Transverse colon (tissue), 4 donors: ENCODE measurements at regions of chrX and their contacts with region 1.

Region 1: GRCh38 chrX:20530406-20530921 is 263.8 kb upstream of the RPS6KA3 start:
- DNase-seq: peak; percentile 57
- H3K4me3 ChIP-seq: no peak overlapping the region
- H3K27ac ChIP-seq: no peak overlapping the region
- H3K4me1 ChIP-seq: peaks cover 0 to 3% (median 0%) of the 10 kb centered on the region in 4 donors
- H3K27me3 ChIP-seq: no peaks in the 10 kb centered on the region
- CTCF ChIP-seq: peak; percentile 58 to 72 (median 59)
- EP300 ChIP-seq: no peak
- POLR2A ChIP-seq: no peak

Region 2: DNA sequence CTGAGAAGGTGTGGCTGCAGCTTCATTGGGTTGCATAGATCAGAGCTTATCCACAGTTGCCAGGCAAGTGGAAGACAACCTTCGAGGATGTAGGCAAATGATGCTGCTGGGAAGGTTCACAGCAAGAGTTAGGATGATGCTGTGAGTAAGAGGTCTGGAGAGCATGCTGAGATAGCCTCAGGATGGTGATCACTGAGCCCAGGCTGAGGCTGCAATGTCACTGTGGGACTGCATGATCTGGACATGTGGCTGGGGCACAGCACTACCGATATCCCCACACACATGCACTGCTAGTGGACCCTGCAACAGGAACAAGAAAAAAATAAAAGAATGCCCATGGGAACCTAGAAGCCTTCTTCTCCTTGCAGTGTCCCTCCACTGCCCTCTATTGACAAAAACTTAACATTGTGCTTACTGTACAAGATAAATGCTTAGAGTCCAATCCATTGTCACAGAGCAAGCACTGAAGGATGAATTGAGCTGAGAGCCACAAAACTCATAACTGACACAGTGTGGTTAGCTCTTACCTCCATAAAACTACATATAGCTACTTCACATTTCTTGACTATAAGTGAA is 949.3 kb after region 1 on chrX:
- in situ Hi-C with region 1: loop called in 2 of 4 experiments (anchors 25 kb)
- intact Hi-C with region 1: no loop called
- DNase-seq: no peak
- H3K4me3 ChIP-seq: no peak overlapping the region
- H3K27ac ChIP-seq: no peak overlapping the region
- H3K4me1 ChIP-seq: no peaks in the 10 kb centered on the region
- H3K27me3 ChIP-seq: no peaks in the 10 kb centered on the region
- CTCF ChIP-seq: peak in 4 of 5 experiments; percentile 23 to 45 (median 36)
- EP300 ChIP-seq: no peak
- POLR2A ChIP-seq: no peak

Region 3: DNA sequence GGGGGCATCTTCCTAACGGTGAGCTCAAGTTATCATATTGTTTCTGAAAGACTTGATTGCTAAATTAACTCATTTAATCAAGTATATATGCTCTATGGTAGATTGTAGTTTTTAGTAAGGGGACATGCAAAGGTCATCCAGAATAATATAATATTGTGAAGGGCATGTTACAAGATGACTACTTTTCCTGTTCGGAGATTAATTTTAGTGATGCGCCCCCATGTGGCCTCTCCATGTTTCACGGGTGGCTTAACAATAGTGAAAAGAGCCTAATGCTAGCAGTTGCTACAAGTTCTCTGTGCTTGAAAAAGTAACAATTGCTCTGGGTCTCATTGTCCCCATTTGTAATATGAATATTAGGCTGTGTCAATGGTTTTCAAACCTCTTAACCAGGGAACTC is 1215.3 kb after region 1 on chrX:
- in situ Hi-C with region 1: loop called (anchors 10 to 25 kb)
- intact Hi-C with region 1: no loop called
- DNase-seq: peak; percentile 28
- H3K4me3 ChIP-seq: no peak overlapping the region
- H3K27ac ChIP-seq: no peak overlapping the region
- H3K4me1 ChIP-seq: no peaks in the 10 kb centered on the region
- H3K27me3 ChIP-seq: no peaks in the 10 kb centered on the region
- CTCF ChIP-seq: peak; percentile 21 to 57 (median 40)
- EP300 ChIP-seq: no peak
- POLR2A ChIP-seq: no peak